Endothelial cell of umbilical vein (primary cell): ENCODE measurements at regions of chr17 and their contacts with region 1.

Region 1: GRCh38 chr17:67800495-67800928 is 24.8 kb upstream of the BPTF start:
- DNase-seq: peak; percentile 85
- H3K4me3 ChIP-seq: no peak overlapping the region
- H3K27ac ChIP-seq: no peak overlapping the region
- H3K4me1 ChIP-seq: no peaks in the 10 kb centered on the region
- H3K27me3 ChIP-seq: no peaks in the 10 kb centered on the region
- CTCF ChIP-seq: peak; percentile 71 to 79
- POLR2A ChIP-seq: no peak

Region 2: GRCh38 chr17:67682196-67682595 is 118.3 kb before region 1 on chr17:
- CTCF ChIA-PET with region 1: no interaction called
- POLR2A ChIA-PET with region 1: no interaction called
- dilution Hi-C with region 1: no loop called
- intact Hi-C with region 1: no loop called
- DNase-seq: no peak
- H3K4me3 ChIP-seq: no peak overlapping the region
- H3K27ac ChIP-seq: no peak overlapping the region
- H3K4me1 ChIP-seq: no peaks in the 10 kb centered on the region
- H3K27me3 ChIP-seq: no peaks in the 10 kb centered on the region
- CTCF ChIP-seq: no peak
- POLR2A ChIP-seq: no peak

Region 3: DNA sequence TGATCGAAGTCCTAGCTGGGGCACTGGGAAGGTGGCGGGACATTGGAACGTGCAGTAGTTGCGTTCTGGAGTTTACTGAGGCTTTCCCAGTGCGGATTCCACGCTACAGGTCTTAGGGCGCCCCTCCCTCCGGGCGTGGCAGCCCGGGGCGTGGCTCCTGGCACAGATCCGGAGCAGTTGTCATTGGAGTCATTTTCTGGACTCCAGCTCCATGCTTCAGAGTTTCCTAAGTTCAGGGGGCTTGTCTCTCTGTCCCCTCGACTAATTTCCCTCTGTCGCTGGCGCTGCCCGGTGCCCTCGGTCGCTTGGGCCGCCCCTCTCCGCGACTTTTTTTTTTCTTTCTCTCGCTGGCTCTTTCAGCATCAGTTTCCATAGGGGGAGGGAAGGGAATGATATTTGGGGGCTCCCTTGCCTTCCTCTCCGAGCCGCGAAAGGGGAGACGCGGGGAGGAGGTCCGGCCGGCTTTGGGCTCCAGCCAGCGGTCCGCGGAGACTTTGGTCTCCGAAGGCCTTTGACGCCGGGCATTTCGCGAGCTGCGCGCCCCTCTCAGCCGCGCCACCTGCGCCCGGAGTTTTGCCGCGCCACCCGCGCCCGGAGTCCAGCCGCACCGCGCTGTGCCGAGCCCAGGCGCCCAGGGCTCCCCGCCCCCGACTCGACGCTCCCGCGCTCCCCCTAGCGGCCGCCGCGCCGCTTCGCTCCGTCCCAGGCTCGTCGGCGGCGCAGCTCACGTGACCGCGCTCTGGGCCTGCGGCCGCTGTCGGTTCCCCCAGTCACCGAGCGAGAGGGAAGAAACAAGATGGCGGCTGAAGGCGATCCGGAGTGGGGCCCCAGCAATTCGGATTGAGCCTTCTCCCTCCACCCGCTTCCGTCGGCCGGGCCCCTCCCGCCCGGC is 24.5 kb after region 1 on chr17 and contains the start of gene BPTF:
- CTCF ChIA-PET with region 1: interaction called, 15 read pairs
- POLR2A ChIA-PET with region 1: no interaction called
- dilution Hi-C with region 1: no loop called
- intact Hi-C with region 1: loop called (anchors 1 kb)
- DNase-seq: peak; percentile 89
- H3K4me3 ChIP-seq: peak within 1 kb of the TSS; percentile 60 to 83 (median 78)
- H3K27ac ChIP-seq: no peak within 1 kb of the TSS
- H3K4me1 ChIP-seq: peaks cover 13% of the 10 kb centered on the region
- H3K27me3 ChIP-seq: no peaks in the 10 kb centered on the region
- CTCF ChIP-seq: peak; percentile 91 to 98
- POLR2A ChIP-seq: peak; percentile 71
- total RNA-seq, gene BPTF: 78.6 and 88.1 TPM in 2 replicates

Region 4: DNA sequence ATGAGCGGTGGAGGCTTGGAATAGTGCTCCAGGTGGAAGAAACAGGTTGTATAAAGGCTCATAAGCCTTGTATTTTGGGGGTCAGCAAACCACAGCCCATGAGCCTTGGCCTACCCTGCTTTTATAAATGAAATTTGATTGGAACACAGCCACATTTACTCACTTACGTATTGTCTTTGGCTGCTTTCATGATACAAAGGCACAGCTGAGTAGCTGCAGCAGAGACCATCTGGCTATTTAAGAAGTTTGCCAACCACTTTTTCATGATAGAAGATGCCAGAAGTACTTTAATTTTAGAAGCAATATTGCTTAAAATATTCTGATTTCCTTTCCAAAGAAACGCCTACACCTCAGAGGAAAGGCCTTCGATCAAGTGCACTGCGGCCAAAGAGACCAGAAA is 122.0 kb after region 1 on chr17:
- CTCF ChIA-PET with region 1: no interaction called
- POLR2A ChIA-PET with region 1: no interaction called
- dilution Hi-C with region 1: no loop called
- intact Hi-C with region 1: loop called (anchors 5 kb)
- DNase-seq: no peak
- H3K4me3 ChIP-seq: no peak overlapping the region
- H3K27ac ChIP-seq: no peak overlapping the region
- H3K4me1 ChIP-seq: no peaks in the 10 kb centered on the region
- H3K27me3 ChIP-seq: no peaks in the 10 kb centered on the region
- CTCF ChIP-seq: no peak
- POLR2A ChIP-seq: no peak

Region 5: GRCh38 chr17:68011199-68011665 is 210.7 kb after region 1 on chr17:
- CTCF ChIA-PET with region 1: no interaction called
- POLR2A ChIA-PET with region 1: no interaction called
- dilution Hi-C with region 1: no loop called
- intact Hi-C with region 1: loop called (anchors 1 kb)
- DNase-seq: peak; percentile 26
- H3K4me3 ChIP-seq: no peak overlapping the region
- H3K27ac ChIP-seq: no peak overlapping the region
- H3K4me1 ChIP-seq: no peaks in the 10 kb centered on the region
- H3K27me3 ChIP-seq: peaks cover 0 to 5% of the 10 kb centered on the region in 2 experiments
- CTCF ChIP-seq: peak; percentile 66 to 76
- POLR2A ChIP-seq: no peak

Region 6: GRCh38 chr17:68021963-68022362 is 221.5 kb after region 1 on chr17:
- CTCF ChIA-PET with region 1: no interaction called
- POLR2A ChIA-PET with region 1: no interaction called
- dilution Hi-C with region 1: no loop called
- intact Hi-C with region 1: no loop called
- DNase-seq: no peak
- H3K4me3 ChIP-seq: no peak overlapping the region
- H3K27ac ChIP-seq: no peak overlapping the region
- H3K4me1 ChIP-seq: peaks cover 7% of the 10 kb centered on the region
- H3K27me3 ChIP-seq: peaks cover 0 to 1% of the 10 kb centered on the region in 2 experiments
- CTCF ChIP-seq: no peak
- POLR2A ChIP-seq: no peak